ENCODE measurements at regions of chr2 and their contacts with region 1.

Region 1: GRCh38 chr2:9373077-9373875 is 50.1 kb downstream of the ITGB1BP1 start:
- DNase-seq: no peak
- H3K4me3 ChIP-seq: no peak overlapping the region
- H3K27ac ChIP-seq: no peak overlapping the region
- H3K4me1 ChIP-seq: peaks cover 0 to 9% (median 1%) of the 10 kb centered on the region in 4 experiments; a peak in 4 of 7 replicates
- H3K27me3 ChIP-seq: no peaks in the 10 kb centered on the region
- CTCF ChIP-seq: no peak
- EP300 ChIP-seq: no peak
- POLR2A ChIP-seq: no peak
- RAD21 ChIP-seq: no peak

Region 2: DNA sequence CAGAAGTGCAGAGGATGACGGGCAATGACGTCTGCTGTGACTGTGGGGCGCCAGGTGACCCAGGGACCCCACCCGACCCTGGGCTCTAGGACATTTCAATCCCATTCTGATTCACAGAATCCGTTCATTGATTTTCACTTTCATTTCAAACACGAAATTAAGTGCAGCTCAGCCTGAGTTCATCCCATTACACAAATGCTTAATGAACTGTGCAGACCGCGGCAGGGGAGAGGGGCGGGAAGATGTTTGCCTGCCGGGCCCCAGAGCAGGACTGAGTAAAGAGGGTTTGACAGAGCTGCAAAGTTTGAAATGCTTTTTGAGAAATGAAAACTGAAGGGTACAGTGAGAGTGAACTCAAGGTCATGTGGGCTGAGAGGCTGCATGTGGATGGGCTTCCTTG is 17.0 kb before region 1 on chr2:
- CTCF ChIA-PET with region 1: interaction called, 17 read pairs
- POLR2A ChIA-PET with region 1: no interaction called
- DNase-seq: no peak
- H3K4me3 ChIP-seq: no peak overlapping the region
- H3K27ac ChIP-seq: no peak overlapping the region
- H3K4me1 ChIP-seq: peaks cover 2 to 14% (median 7%) of the 10 kb centered on the region in 4 experiments; a peak in 6 of 7 replicates
- H3K27me3 ChIP-seq: no peaks in the 10 kb centered on the region
- CTCF ChIP-seq: no peak
- EP300 ChIP-seq: no peak
- POLR2A ChIP-seq: no peak
- RAD21 ChIP-seq: no peak

Region 3: GRCh38 chr2:9385841-9386240 is 12.6 kb after region 1 on chr2:
- CTCF ChIA-PET with region 1: interaction called, 17 read pairs
- POLR2A ChIA-PET with region 1: interaction called, 3 read pairs
- DNase-seq: no peak
- H3K4me3 ChIP-seq: no peak overlapping the region
- H3K27ac ChIP-seq: no peak overlapping the region
- H3K4me1 ChIP-seq: peaks cover 0 to 2% (median 0%) of the 10 kb centered on the region in 4 experiments; a peak in 1 of 7 replicates
- H3K27me3 ChIP-seq: no peaks in the 10 kb centered on the region
- CTCF ChIP-seq: no peak
- EP300 ChIP-seq: no peak
- POLR2A ChIP-seq: no peak
- RAD21 ChIP-seq: no peak